ENCODE measurements at regions of chr1 and their contacts with region 1.

Region 1: GRCh38 chr1:36342481-36343478 is 19.3 kb upstream of the EVA1B start:
- DNase-seq: peak; percentile 71
- ATAC-seq: peak; percentile 76
- H3K4me3 ChIP-seq: no peak overlapping the region
- H3K4me3 Mint-ChIP-seq: no peak overlapping the region
- H3K27ac ChIP-seq: no peak overlapping the region
- H3K27ac Mint-ChIP-seq: no peak overlapping the region
- H3K4me1 ChIP-seq: peaks cover 0 to 5% of the 10 kb centered on the region in 2 donors
- H3K4me1 Mint-ChIP-seq: peaks cover 10% of the 10 kb centered on the region
- H3K27me3 ChIP-seq: no peaks in the 10 kb centered on the region
- H3K27me3 Mint-ChIP-seq: no peaks in the 10 kb centered on the region
- CTCF ChIP-seq: peak; percentile 68

Region 2: DNA sequence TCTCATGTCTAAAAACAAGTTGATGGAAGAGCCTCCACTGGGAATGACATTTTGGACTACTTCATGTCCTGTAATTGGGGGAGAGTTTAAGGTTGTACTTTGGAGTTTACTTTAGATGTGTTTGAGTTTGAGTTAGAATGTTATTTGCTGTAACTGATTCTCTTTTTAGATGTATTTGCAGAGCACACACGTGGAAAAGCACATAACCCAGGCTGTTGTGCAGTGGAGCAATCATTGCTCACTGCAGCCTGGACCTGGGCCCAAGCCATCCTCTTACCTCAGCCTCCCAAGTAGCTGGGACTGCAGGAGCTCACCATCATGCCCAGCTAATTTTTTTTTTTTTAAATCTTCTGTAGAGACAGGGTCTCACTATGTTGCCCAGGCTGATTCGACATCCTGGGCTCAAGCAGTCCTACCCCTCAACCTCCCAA is 73.4 kb before region 1 on chr1:
- CTCF ChIA-PET with region 1: no interaction called
- POLR2A ChIA-PET with region 1: no interaction called
- intact Hi-C with region 1: no loop called
- DNase-seq: no peak
- ATAC-seq: no peak
- H3K4me3 ChIP-seq: no peak overlapping the region
- H3K4me3 Mint-ChIP-seq: no peak overlapping the region
- H3K27ac ChIP-seq: no peak overlapping the region
- H3K27ac Mint-ChIP-seq: no peak overlapping the region
- H3K4me1 ChIP-seq: no peaks in the 10 kb centered on the region
- H3K4me1 Mint-ChIP-seq: peaks cover 8% of the 10 kb centered on the region
- H3K27me3 ChIP-seq: no peaks in the 10 kb centered on the region
- H3K27me3 Mint-ChIP-seq: no peaks in the 10 kb centered on the region
- CTCF ChIP-seq: no peak

Region 3: GRCh38 chr1:36328713-36329112 is 14.1 kb before region 1 on chr1:
- CTCF ChIA-PET with region 1: no interaction called
- POLR2A ChIA-PET with region 1: no interaction called
- intact Hi-C with region 1: no loop called
- DNase-seq: no peak
- ATAC-seq: no peak
- H3K4me3 ChIP-seq: no peak overlapping the region
- H3K4me3 Mint-ChIP-seq: no peak overlapping the region
- H3K27ac ChIP-seq: no peak overlapping the region
- H3K27ac Mint-ChIP-seq: no peak overlapping the region
- H3K4me1 ChIP-seq: peaks cover 10 to 11% of the 10 kb centered on the region in 2 donors
- H3K4me1 Mint-ChIP-seq: peaks cover 13% of the 10 kb centered on the region
- H3K27me3 ChIP-seq: peaks cover 0 to 27% (median 10%) of the 10 kb centered on the region in 4 experiments
- H3K27me3 Mint-ChIP-seq: peaks cover 52% of the 10 kb centered on the region
- CTCF ChIP-seq: no peak

Region 4: GRCh38 chr1:36397378-36398230 is 54.8 kb after region 1 on chr1 and contains the start of gene LSM10:
- CTCF ChIA-PET with region 1: interaction called, 14 read pairs
- POLR2A ChIA-PET with region 1: no interaction called
- intact Hi-C with region 1: no loop called
- DNase-seq: peak; percentile 93
- ATAC-seq: peak; percentile 88
- H3K4me3 ChIP-seq: peak within 1 kb of the TSS; percentile 76 to 99 (median 97)
- H3K4me3 Mint-ChIP-seq: peak within 1 kb of the TSS; percentile 92
- H3K27ac ChIP-seq: peak within 1 kb of the TSS; percentile 78 to 93
- H3K27ac Mint-ChIP-seq: peak within 1 kb of the TSS; percentile 94
- H3K4me1 ChIP-seq: peaks cover 20 to 47% of the 10 kb centered on the region in 2 donors
- H3K4me1 Mint-ChIP-seq: peaks cover 55% of the 10 kb centered on the region
- H3K27me3 ChIP-seq: no peaks in the 10 kb centered on the region
- H3K27me3 Mint-ChIP-seq: no peaks in the 10 kb centered on the region
- CTCF ChIP-seq: no peak
- total RNA-seq, gene LSM10: 70.6 and 73.5 TPM in 2 replicates

Region 5: GRCh38 chr1:36411674-36412520 is 69.1 kb after region 1 on chr1:
- CTCF ChIA-PET with region 1: interaction called, 98 read pairs
- POLR2A ChIA-PET with region 1: interaction called, 5 read pairs
- intact Hi-C with region 1: no loop called
- DNase-seq: peak; percentile 32
- ATAC-seq: peak; percentile 57
- H3K4me3 ChIP-seq: no peak overlapping the region
- H3K4me3 Mint-ChIP-seq: peak overlapping the region; percentile 3
- H3K27ac ChIP-seq: peak overlapping the region; percentile 8 to 41
- H3K27ac Mint-ChIP-seq: peak overlapping the region; percentile 56
- H3K4me1 ChIP-seq: peaks cover 12 to 14% of the 10 kb centered on the region in 2 donors
- H3K4me1 Mint-ChIP-seq: peaks cover 21% of the 10 kb centered on the region
- H3K27me3 ChIP-seq: no peaks in the 10 kb centered on the region
- H3K27me3 Mint-ChIP-seq: no peaks in the 10 kb centered on the region
- CTCF ChIP-seq: no peak

Measured in B cell (primary cell).